AG04449 (cell line): ENCODE measurements at regions of chr17 and their contacts with region 1.

Region 1: GRCh38 chr17:66915204-66916096 is 49.1 kb upstream of the CACNG4 start:
- DNase-seq: no peak
- H3K4me3 ChIP-seq: no peak overlapping the region
- CTCF ChIP-seq: peak; percentile 59

Region 2: GRCh38 chr17:66791347-66791746 is 124.1 kb before region 1 on chr17:
- CTCF ChIA-PET with region 1: no interaction called
- POLR2A ChIA-PET with region 1: no interaction called
- DNase-seq: no peak
- H3K4me3 ChIP-seq: no peak overlapping the region
- CTCF ChIP-seq: no peak

Region 3: GRCh38 chr17:66925811-66926500 is 10.5 kb after region 1 on chr17:
- CTCF ChIA-PET with region 1: interaction called, 11 read pairs
- POLR2A ChIA-PET with region 1: no interaction called
- DNase-seq: no peak
- H3K4me3 ChIP-seq: no peak overlapping the region
- CTCF ChIP-seq: no peak